Stomach (tissue), 19 donors: ENCODE measurements at regions of chr17 and their contacts with region 1.

Region 1: GRCh38 chr17:29111816-29112499 is 68.2 kb downstream of the MYO18A start:
- DNase-seq: peak; percentile 72 to 90
- H3K4me3 ChIP-seq: no peak overlapping the region
- H3K27ac ChIP-seq: peak overlapping the region in 1 of 5 donors; percentile 34
- H3K4me1 ChIP-seq: peaks cover 5 to 34% (median 12%) of the 10 kb centered on the region in 4 donors
- H3K27me3 ChIP-seq: no peaks in the 10 kb centered on the region
- CTCF ChIP-seq: peak in 5 of 7 experiments; percentile 74 to 87 (median 83)
- EP300 ChIP-seq: no peak
- POLR2A ChIP-seq: no peak

Region 2: DNA sequence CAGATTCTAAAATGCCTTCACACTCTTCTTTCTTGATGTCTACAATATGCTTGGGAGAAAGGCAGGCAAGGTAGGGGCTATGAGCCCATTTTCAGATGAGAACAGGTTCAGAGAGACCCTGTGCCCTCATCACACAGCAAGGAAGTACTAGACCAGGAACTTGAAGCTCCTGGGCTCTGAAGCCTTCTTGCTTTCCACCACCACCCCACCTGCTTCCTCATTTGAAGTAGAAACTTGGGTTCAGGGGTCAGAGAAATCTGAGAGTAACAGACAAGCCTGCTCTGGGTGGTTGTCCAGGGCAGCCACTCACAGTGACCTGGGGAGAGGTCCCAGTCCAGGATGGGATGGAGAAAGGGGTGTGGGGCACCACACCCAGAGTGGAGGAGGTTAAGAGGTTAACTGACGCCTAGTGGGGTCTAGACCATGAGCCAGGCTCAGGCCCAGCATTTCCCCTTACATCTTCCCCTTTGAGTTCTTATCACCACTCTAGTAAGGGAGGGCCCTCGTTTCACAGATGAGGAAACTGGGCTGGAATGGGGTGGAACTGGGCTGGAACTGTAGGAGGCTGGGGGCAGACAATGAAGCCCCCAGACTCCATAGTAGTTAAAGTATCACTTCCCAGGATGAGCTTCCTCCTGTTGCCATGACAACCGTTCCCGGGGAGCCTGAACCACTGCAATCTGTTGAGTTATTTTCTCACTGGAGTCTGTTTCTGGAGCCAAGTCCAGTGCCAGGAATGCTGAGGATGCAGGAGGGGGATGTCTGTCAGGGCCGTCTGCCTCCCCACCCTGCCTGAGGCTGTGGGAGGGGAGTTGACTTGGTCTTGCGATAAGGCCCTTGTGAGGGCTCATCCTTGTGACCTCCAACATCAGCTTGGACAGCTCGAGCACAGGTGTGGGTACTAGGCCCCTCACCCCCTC is 144.5 kb before region 1 on chr17:
- intact Hi-C with region 1: loop called (anchors 5 kb)
- DNase-seq: peak in 1 of 2 donors; percentile 51
- H3K4me3 ChIP-seq: no peak overlapping the region
- H3K27ac ChIP-seq: peak overlapping the region in 1 of 5 donors; percentile 2
- H3K4me1 ChIP-seq: peaks cover 0 to 32% (median 0%) of the 10 kb centered on the region in 4 donors
- H3K27me3 ChIP-seq: peaks cover 0 to 15% (median 0%) of the 10 kb centered on the region in 3 donors
- CTCF ChIP-seq: no peak
- EP300 ChIP-seq: no peak
- POLR2A ChIP-seq: no peak

Region 3: DNA sequence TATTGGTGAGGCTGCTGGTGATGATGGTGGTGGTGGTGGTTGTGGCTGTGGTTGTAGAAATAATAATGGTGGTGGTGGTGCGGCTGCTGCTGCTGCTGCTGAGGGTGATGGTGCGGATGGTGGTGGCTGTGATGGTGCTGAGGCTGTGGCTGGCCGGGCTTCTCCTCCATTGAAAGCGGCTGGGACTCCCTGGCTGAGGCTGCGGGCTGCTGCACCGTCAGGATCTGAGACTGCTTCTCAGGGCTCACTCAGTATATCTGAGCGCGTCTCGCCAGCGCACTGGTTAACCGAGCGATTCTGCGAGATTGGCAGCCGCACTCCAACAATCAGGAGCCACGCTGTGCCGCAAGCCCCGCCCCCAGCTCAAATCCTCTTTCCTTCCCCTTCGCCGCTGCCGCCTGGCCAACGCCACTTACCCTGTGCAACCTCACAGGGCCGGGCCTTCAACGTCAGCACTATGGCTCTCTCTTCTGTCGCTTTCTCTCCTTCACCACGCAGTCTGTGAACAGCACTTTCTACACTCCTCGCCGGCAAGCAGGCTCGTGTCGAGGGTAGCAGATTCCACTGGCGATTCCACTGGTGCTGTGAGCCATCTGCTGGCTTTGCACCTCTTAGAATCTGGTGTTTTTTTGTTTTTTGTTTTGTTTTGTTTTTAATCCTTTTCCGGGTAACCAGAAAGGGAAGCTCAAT is 182.1 kb after region 1 on chr17 and contains the start of gene NUFIP2:
- intact Hi-C with region 1: no loop called
- DNase-seq: peak; percentile 100
- H3K4me3 ChIP-seq: peak within 1 kb of the TSS; percentile 85 to 99 (median 93)
- H3K27ac ChIP-seq: peak within 1 kb of the TSS; percentile 97 to 100 (median 99)
- H3K4me1 ChIP-seq: peaks cover 19 to 40% (median 27%) of the 10 kb centered on the region in 4 donors
- H3K27me3 ChIP-seq: no peaks in the 10 kb centered on the region
- CTCF ChIP-seq: peak in 1 of 7 experiments; percentile 22
- EP300 ChIP-seq: no peak
- POLR2A ChIP-seq: peak in 3 of 4 donors; percentile 92 to 99 (median 99)
- total RNA-seq, gene NUFIP2: 22.0 to 151 (median 39.7) TPM